PC-9 (cell line): ENCODE measurements at regions of chr17 and their contacts with region 1.

Region 1: DNA sequence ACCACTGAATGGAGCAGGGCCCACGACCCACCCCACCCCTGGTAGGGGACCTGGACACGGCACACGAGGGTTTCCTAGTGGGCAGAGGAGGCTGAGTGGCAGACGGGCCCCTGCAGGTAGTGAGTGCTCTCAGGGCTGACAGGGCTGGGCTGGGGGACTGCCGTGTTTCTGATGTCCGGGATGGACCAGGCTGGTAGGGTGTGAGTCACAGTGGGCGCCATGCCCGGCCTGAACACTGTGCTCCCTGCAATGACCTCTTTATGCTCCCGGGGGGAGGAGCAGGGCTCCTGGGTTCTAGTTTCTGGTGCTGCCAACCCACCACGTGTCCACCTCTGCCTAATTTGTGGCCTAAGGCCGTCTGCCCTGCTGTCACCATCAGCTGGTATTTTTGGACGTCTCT is 26.3 kb downstream of the ARHGAP23 start:
- DNase-seq: peak; percentile 74 to 84
- H3K4me3 ChIP-seq: peak overlapping the region; percentile 67
- H3K27ac ChIP-seq: peak overlapping the region; percentile 38
- H3K4me1 ChIP-seq: peaks cover 65% of the 10 kb centered on the region
- H3K27me3 ChIP-seq: no peaks in the 10 kb centered on the region
- CTCF ChIP-seq: no peak

Region 2: DNA sequence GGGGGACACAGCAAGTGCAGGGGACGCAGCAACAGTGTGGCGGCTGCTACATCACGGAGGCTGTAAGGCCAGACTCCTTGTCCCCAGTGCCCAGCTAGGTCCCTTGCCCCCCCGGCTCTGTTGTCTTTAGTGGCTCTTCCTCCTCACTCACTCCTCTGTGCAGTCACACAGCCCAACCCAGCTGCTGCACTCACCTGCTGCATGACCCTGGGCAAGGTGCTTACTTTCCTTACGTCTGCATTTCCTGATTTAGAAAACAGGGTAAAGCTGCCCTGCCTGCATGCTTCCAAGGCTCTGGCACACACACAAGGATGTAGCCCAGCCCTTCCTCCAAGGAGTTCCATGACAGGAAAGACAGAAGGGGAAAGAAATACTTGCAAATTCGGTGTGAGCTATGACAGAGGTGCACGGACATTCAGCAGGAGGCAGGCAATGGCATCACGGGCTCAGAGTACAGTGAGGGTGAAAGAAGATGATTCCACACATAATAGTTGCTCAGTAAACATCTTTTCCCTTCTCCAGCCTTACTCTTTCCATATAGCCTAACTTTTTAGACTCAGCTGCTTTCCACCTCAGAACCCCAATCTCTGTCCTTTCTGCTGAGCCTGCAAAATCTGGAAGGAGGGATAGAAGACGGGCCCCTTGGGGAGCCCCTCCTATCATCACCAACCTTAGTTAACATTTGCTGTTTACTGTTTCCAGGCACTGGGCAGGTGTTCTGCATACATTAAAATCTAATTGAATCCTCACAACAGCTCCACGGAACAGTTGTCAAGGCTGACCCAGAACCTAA is 1702.2 kb before region 1 on chr17:
- CTCF ChIA-PET with region 1: no interaction called
- POLR2A ChIA-PET with region 1: interaction called, 11 read pairs
- intact Hi-C with region 1: no loop called
- DNase-seq: peak in 1 of 2 experiments; percentile 4
- H3K4me3 ChIP-seq: no peak overlapping the region
- H3K27ac ChIP-seq: no peak overlapping the region
- H3K4me1 ChIP-seq: no peaks in the 10 kb centered on the region
- H3K27me3 ChIP-seq: peaks cover 33% of the 10 kb centered on the region
- CTCF ChIP-seq: no peak

Region 3: DNA sequence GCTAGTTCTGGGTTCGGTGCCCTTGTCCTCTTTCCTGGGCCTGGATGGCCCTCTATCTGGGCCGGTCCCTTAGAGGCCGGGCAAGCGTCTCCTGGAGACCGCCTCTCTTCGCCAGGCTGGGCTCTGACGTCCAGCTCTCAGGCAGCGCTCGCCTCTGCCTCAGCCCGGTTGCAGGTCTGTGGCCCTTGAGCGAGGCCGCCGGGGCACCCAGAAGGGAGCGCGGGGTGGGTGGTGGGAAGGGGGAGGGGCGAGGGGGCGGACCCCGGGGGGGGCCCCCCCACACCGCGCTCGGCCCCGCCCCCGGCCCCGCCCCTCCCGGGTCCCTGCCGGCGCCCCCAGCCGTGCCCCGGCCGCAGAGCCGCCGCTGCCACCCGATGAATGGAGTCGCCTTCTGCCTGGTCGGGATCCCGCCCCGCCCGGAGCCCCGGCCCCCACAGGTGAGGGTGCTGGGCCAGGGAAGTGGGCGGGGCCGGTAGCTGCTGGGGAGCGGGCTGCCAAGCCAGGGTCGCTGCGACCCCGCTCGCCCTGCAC is 26.3 kb before region 1 on chr17 and contains the start of gene ARHGAP23:
- CTCF ChIA-PET with region 1: no interaction called
- POLR2A ChIA-PET with region 1: interaction called, 7 read pairs
- intact Hi-C with region 1: loop called (anchors 1 kb)
- DNase-seq: peak; percentile 54 to 69
- H3K4me3 ChIP-seq: peak within 1 kb of the TSS; percentile 84
- H3K27ac ChIP-seq: 0 out of 2 replicates have a peak within 1 kb of the TSS, but pooled peaks have one; percentile 4
- H3K4me1 ChIP-seq: peaks cover 34% of the 10 kb centered on the region
- H3K27me3 ChIP-seq: no peaks in the 10 kb centered on the region
- CTCF ChIP-seq: no peak
- total RNA-seq, gene ARHGAP23: 129 and 137 TPM in 2 replicates

Region 4: GRCh38 chr17:38464723-38465390 is 10.3 kb after region 1 on chr17:
- CTCF ChIA-PET with region 1: interaction called, 6 read pairs
- POLR2A ChIA-PET with region 1: interaction called, 53 read pairs
- intact Hi-C with region 1: loop called (anchors 1 kb)
- DNase-seq: peak in 1 of 2 experiments; percentile 89
- H3K4me3 ChIP-seq: no peak overlapping the region
- H3K27ac ChIP-seq: no peak overlapping the region
- H3K4me1 ChIP-seq: no peaks in the 10 kb centered on the region; the same call in 1 of the 2 replicates
- H3K27me3 ChIP-seq: no peaks in the 10 kb centered on the region
- CTCF ChIP-seq: no peak